ENCODE measurements at regions of chr17 and their contacts with region 1.

Region 1: GRCh38 chr17:4789901-4790704 is 1.3 kb downstream of the GLTPD2 start:
- DNase-seq: peak; percentile 86 to 95 (median 90)
- H3K4me3 ChIP-seq: peak overlapping the region; percentile 83 to 92 (median 86)
- H3K27ac ChIP-seq: peak overlapping the region; percentile 92 to 93
- H3K4me1 ChIP-seq: peaks cover 0 to 25% (median 12%) of the 10 kb centered on the region in 3 donors
- H3K27me3 ChIP-seq: peaks cover 9% of the 10 kb centered on the region
- CTCF ChIP-seq: peak; percentile 54

Region 2: DNA sequence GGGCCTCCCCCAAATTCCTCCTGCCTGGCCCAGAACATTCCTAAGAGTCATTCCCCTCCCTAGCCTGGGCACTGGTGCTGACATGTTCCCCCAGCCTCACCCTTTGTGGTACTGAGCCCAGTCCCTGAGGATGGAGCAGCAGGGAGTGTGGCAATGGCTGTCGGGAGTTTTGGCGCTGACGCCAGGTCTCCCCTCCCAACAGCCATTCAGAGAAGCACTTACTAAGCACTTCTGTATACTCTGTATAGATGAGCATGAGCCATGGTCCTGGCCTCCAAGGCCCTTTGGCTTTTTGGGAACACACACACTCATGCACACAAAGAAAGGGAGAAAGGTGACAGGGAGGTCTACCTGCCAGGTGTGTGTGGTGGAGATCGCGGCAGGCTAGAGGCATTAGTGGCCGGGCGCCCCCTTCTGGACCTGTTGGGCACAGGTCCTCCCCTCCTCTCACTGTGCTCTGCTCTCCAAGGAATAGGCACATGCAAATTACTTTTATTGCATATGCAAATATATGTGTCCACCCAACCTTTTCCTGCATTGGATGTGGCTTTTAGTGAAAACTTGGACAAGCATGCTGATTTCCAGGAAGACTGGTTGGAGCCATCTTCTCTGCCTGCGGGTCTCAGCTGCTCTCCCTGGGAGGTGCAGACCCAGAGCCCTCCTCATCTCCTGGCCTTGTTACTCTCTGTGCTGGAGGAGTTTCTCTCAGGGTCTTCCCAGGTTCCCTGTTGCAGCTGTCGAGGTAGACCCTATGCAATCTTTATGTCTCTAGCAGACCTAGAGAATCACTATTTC is 91.9 kb after region 1 on chr17:
- intact Hi-C with region 1: loop called (anchors 5 kb)
- DNase-seq: peak in 4 of 5 donors; percentile 69 to 77 (median 73)
- H3K4me3 ChIP-seq: no peak overlapping the region
- H3K27ac ChIP-seq: no peak overlapping the region
- H3K4me1 ChIP-seq: peaks cover 0 to 4% (median 0%) of the 10 kb centered on the region in 3 donors
- H3K27me3 ChIP-seq: no peaks in the 10 kb centered on the region
- CTCF ChIP-seq: peak; percentile 78